Uterus (tissue), 4 donors: ENCODE measurements at regions of chr16 and their contacts with region 1.

Region 1: DNA sequence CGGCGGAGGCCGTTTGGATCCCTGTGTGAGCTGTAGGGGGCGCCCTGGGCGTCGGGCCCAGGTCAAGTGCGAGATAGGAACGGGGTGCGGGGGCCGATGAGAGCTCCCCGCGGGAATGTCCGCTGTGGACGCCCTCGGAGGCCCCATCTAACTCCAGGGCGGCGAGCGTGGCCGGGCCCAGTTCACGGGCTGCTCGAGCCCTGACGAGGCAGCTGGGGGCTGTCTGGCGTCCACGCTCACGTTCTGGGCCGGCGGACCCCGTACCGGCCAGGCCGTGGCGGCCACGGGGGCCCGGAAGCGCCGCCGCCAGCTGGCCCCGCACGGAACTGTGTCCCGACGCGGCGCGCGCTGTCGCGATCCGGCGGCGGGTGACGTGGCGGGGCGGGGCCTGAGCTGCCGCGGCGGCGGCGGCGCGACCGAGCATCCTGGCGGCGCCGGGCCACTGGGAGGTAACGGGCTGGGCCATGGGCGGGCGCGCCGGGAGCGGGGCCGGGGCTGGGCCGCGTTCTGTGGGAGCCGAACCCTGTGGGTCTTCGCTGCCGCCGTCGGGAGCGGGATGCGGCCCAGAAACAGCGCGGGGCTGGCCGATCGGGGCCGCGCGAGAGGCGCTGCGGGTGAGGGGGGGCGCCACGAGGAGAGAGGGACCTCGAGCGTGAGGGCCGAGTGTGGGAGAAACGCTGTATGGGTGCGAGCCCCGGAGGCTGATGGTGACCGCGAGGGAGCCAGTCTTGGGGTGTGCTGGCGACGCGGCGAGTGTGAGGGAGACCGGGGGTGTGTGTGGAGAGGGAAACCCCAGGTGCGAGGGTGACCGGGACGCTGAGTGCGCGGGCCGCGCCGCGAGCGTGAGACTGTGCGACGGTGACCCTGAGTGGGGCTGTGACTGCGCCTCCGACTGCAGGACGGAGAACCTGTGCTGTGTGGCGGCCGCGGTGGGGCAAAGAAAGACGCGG is at the start of gene SLC7A6:
- DNase-seq: peak; percentile 59 to 74
- H3K4me3 ChIP-seq: peak within 1 kb of the TSS; percentile 63 to 65
- H3K27ac ChIP-seq: peak within 1 kb of the TSS; percentile 89 to 94
- H3K4me1 ChIP-seq: no peaks in the 10 kb centered on the region
- H3K27me3 ChIP-seq: no peaks in the 10 kb centered on the region
- CTCF ChIP-seq: peak; percentile 44 to 72 (median 58)
- POLR2A ChIP-seq: peak; percentile 78 to 80
- total RNA-seq, gene SLC7A6: 6.8 to 40.0 (median 19.6) TPM

Region 2: GRCh38 chr16:68310761-68311511 is 46.5 kb after region 1 on chr16 and contains the starts of genes PRMT7 and SLC7A6OS:
- intact Hi-C with region 1: loop called (anchors 5 kb)
- DNase-seq: peak; percentile 80 to 84
- H3K4me3 ChIP-seq: peak within 1 kb of the TSS; percentile 67 to 88
- H3K27ac ChIP-seq: peak within 1 kb of the TSS; percentile 74 to 77
- H3K4me1 ChIP-seq: peaks cover 6 to 13% of the 10 kb centered on the region in 2 donors
- H3K27me3 ChIP-seq: no peaks in the 10 kb centered on the region
- CTCF ChIP-seq: peak in 3 of 4 experiments; percentile 16 to 61 (median 40)
- POLR2A ChIP-seq: peak; percentile 38 to 70
- total RNA-seq, gene PRMT7: 8.2 to 111 (median 66.9) TPM
- total RNA-seq, gene SLC7A6OS: 7.6 to 18.9 (median 13.4) TPM

Region 3: GRCh38 chr16:68328151-68328859 is 63.9 kb after region 1 on chr16:
- intact Hi-C with region 1: loop called (anchors 5 kb)
- DNase-seq: peak; percentile 72 to 73
- H3K4me3 ChIP-seq: no peak overlapping the region
- H3K27ac ChIP-seq: no peak overlapping the region
- H3K4me1 ChIP-seq: no peaks in the 10 kb centered on the region
- H3K27me3 ChIP-seq: no peaks in the 10 kb centered on the region
- CTCF ChIP-seq: peak; percentile 83 to 93 (median 88)
- POLR2A ChIP-seq: no peak